ENCODE measurements at regions of chr3 and their contacts with region 1.

Region 1: GRCh38 chr3:186783073-186783730 is at the start of gene EIF4A2:
- DNase-seq: peak; percentile 87
- H3K4me3 ChIP-seq: peak within 1 kb of the TSS; percentile 78 to 88
- H3K27ac ChIP-seq: peak within 1 kb of the TSS; percentile 99
- H3K4me1 ChIP-seq: peaks cover 11% of the 10 kb centered on the region
- H3K27me3 ChIP-seq: no peaks in the 10 kb centered on the region
- CTCF ChIP-seq: peak in 2 of 4 experiments; percentile 1 to 17
- POLR2A ChIP-seq: peak; percentile 72
- total RNA-seq, gene EIF4A2: 291 to 402 TPM

Region 2: GRCh38 chr3:185937689-185938463 is 845.3 kb before region 1 on chr3 and contains the start of gene TRA2B:
- intact Hi-C with region 1: loop called (anchors 10 kb)
- DNase-seq: peak; percentile 99
- H3K4me3 ChIP-seq: peak within 1 kb of the TSS; percentile 88 to 100
- H3K27ac ChIP-seq: peak within 1 kb of the TSS; percentile 100
- H3K4me1 ChIP-seq: no peaks in the 10 kb centered on the region
- H3K27me3 ChIP-seq: no peaks in the 10 kb centered on the region
- CTCF ChIP-seq: peak in 1 of 4 experiments; percentile 34
- POLR2A ChIP-seq: peak; percentile 100
- total RNA-seq, gene TRA2B: 132 to 137 TPM

Region 3: DNA sequence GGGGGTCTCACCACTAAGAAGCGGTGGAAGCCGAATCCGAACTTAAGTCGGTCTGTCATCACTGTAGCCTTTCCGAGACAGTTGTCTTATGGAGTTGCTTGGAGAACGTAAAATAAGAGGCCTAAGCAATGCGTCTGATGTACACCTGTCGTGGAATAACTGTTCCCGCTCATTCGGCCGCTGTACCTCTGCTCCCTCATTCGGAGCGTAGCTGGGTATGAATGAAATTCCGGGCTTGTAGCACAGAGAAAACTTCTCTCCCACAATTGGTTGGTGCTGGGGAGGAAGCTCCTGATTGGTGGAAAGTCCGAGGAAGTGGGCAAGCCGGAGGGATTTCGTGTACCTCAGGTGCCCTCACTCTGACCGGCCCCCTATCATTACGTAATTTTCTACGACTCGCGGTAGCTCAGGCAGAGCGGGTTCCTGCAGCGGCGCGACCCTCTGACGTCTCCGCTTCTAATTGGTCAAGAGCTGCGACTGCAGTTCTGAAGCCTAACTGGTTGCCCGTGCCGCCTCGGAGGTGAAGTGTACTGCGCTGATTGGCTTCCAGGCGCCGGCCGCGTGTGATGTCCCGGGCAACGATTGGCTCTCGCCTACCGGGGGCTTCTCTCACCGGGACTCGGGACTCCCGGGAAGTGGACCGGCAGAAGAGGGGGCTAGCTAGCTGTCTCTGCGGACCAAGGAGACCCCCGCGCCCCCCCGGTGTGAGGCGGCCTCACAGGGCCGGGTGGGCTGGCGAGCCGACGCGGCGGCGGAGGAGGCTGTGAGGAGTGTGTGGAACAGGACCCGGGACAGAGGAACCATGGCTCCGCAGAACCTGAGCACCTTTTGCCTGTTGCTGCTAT is 212.9 kb before region 1 on chr3 and contains the start of gene DNAJB11:
- intact Hi-C with region 1: loop called (anchors 10 kb)
- DNase-seq: peak; percentile 100
- H3K4me3 ChIP-seq: peak within 1 kb of the TSS; percentile 59 to 76
- H3K27ac ChIP-seq: peak within 1 kb of the TSS; percentile 79 to 80
- H3K4me1 ChIP-seq: peaks cover 3% of the 10 kb centered on the region
- H3K27me3 ChIP-seq: no peaks in the 10 kb centered on the region
- CTCF ChIP-seq: peak in 1 of 4 experiments; percentile 20
- POLR2A ChIP-seq: peak; percentile 64
- total RNA-seq, gene DNAJB11: 34.9 to 42.5 TPM

Region 4: DNA sequence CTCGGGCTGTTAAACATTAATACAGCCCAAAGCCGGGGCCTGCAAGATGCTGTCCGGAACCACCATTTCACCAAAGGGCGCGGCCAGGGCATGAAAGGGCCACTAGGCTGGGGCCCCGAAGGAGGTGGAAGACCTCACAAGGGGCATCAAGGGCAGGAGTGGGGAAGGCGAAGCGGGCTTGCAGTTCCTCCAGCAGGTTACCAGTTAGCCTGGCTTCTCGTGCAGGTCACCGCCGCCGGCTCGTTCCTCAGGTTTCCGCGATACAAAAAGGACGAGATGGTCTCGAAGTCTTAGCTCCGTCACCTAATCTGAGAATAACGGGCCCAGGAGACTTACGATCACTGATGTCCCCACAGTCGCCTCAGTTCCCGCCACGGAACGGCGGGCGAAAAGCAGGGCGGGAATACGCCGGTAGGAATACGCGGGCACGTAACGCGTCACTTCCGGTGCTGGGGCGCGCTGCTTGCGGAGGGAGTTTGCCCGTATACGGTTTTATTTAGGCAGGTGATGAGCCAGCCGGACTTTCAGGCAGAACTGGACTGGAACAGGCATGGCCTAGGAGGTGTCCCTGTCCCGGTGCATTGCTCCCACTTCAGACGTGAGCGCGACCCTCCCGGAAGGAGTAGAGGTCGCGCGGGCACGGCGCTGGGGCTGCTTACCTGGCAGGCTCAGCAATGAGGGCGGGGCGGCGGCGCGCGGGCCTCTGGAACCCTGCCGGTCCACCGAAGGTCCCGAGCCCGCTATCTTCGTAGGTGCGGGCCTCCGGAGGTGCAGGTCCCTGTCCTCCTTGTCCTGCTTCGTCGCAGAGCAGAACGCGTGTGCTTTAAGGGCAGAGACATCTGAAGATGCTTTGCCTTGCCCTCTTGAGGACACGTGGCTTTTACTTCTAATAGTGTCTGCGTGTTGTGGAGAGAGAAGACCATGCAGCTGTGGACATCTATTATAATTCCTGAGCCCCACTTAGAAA is 23.2 kb after region 1 on chr3 and contains the start of gene RFC4:
- intact Hi-C with region 1: loop called (anchors 2 kb)
- DNase-seq: peak; percentile 84
- H3K4me3 ChIP-seq: peak within 1 kb of the TSS; percentile 63 to 64
- H3K27ac ChIP-seq: peak within 1 kb of the TSS; percentile 89 to 94
- H3K4me1 ChIP-seq: no peaks in the 10 kb centered on the region
- H3K27me3 ChIP-seq: no peaks in the 10 kb centered on the region
- CTCF ChIP-seq: no peak
- POLR2A ChIP-seq: peak; percentile 37
- total RNA-seq, gene RFC4: 13.6 to 17.3 TPM

Measured in prostate gland (tissue), 2 donors.